ENCODE measurements at regions of chr4 and their contacts with region 1.

Region 1: DNA sequence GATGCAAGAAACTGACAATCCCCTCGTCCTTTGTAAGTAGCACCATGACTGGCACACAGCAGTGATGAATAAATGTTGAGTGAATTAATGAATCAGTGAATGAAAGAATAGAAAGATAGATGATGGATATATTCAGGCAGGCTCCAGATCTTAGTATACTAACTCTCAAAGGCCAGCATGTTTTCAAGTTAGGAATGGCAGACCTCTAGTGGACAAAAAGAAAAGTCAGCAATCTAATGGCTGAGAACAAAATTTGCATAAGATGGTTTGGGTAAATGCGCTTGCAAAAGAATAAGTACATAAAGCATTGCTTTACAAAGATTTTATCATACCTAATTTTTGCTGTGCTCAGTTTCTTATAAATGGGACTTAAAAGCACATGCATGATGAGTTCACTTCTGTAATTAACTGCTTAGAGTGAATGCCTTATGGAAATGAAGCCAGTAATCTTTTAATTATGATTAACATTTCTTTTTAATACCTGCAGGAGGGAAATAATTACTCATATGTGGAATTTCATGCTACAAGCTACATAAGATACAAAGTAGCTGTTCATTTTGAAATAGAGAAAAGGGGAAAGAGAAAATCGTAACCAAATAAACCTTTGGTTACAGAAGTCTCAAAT is 126.9 kb upstream of the GPRIN3 start:
- DNase-seq: no peak
- H3K4me3 ChIP-seq: no peak overlapping the region
- H3K27ac ChIP-seq: no peak overlapping the region
- H3K4me1 ChIP-seq: peaks cover 0 to 3% of the 10 kb centered on the region in 2 donors
- H3K27me3 ChIP-seq: no peaks in the 10 kb centered on the region
- CTCF ChIP-seq: peak; percentile 58 to 82 (median 72)
- POLR2A ChIP-seq: no peak

Region 2: DNA sequence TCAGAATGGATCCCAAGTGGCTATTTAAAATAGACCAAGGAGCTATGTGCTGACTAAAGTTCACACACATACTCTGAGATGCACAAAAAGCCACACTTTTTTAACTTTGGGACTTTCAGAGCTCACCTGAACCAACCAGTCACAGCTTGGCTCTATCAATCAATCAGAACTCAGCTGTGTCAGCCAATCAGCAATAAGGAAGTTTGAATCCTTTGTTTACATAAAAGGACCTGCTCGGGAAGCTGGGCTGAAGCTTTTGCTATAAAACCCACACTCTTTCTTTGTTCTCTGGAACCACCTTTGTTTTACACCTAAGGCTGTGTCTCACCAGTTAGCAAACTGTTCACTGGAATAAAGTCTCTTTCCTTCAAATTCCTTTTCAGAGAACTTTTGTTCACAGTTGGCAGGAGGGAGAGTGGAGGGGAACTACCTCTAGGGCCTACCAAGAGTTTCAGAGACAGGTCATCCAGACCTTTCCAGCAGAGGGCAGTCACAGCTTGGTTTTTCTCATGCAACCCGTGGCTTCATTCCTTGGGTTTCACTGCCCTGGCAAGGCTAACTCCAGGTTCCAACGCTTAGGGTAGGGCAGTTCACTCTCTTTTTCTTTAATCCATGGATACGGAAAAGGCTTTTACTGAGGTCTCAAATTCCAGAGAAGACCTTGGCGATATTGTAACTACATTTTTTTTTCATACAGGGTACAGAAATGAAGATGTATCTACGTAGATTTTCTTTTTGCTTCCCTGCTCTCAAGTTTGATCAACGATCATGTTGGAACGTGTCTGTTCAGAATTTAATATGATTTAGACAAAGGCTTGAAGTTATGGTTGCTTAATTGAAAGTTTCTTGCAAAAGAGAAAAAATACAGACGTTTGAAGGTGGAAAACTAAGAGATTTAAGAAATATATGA is 207.6 kb before region 1 on chr4:
- intact Hi-C with region 1: loop called (anchors 5 to 10 kb)
- DNase-seq: peak; percentile 77 to 93 (median 84)
- H3K4me3 ChIP-seq: no peak overlapping the region
- H3K27ac ChIP-seq: no peak overlapping the region
- H3K4me1 ChIP-seq: no peaks in the 10 kb centered on the region
- H3K27me3 ChIP-seq: no peaks in the 10 kb centered on the region
- CTCF ChIP-seq: peak; percentile 51 to 84 (median 79)
- POLR2A ChIP-seq: no peak

Region 3: DNA sequence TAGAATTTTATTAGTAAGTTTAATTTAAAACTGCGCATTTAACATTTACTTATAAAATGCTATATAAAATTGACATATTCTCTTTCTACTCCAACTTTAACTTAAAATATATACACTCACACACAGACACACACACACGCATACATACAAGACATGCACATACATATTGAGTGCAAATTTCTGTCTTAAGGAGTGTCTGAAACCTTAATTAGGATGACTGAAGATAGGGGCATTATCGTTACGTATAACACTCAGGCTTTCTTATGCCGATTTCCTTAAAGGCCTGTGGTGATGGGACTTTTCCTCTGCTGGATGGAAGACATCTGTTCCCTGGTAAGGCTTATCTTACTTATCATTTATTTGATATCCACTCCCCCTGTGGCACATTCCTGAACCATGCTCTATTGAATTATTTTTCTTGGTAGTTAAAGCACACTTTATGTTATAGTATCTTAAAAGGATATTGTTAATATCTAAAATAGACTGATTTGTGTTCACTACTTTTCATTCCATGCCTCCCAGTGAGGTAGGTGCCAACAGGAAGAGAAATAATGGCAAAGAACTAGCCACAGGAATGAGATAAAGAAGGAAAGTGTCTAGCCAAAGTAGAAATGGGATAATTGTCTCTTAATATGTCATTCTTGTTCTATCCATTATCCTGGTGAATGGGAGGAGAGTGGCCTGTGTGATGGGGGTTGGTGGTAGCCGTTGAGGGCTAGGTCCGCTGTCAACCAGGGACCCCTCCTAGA is 34.0 kb before region 1 on chr4:
- intact Hi-C with region 1: no loop called
- DNase-seq: no peak
- H3K4me3 ChIP-seq: no peak overlapping the region
- H3K27ac ChIP-seq: no peak overlapping the region
- H3K4me1 ChIP-seq: no peaks in the 10 kb centered on the region
- H3K27me3 ChIP-seq: no peaks in the 10 kb centered on the region
- CTCF ChIP-seq: no peak
- POLR2A ChIP-seq: no peak

Measured in adrenal gland (tissue), 19 donors.